Activated naive CD4-positive, alpha-beta T cell treated with anti-CD3 and anti-CD28 coated beads for 36 hours (primary cell): ENCODE measurements at regions of chr14 and their contacts with region 1.

Region 1: DNA sequence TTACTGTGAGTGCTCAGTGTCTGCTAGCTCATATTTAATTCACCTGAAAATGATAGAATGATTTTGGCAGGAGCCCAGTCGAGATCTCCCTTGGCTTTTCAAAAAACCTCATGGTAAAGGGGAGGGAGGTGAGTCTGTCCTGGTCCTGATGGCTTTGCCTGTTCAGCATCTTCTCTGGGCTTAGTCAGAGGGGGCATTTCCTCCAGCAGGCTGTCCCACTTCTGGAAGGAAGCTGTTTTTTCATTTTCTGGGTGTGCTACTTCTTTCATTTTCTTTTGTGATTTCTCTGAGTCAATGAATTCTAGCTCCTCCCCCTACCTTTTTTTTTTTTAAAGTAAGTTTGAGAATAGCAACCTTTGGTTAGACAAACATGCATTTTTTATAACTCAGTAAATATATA is 58.8 kb downstream of the TMX1 start:
- DNase-seq: peak; percentile 53
- H3K4me3 Mint-ChIP-seq: no peak overlapping the region
- H3K27ac Mint-ChIP-seq: no peak overlapping the region
- H3K4me1 Mint-ChIP-seq: peaks cover 12% of the 10 kb centered on the region
- H3K27me3 Mint-ChIP-seq: peaks cover 5% of the 10 kb centered on the region

Region 2: DNA sequence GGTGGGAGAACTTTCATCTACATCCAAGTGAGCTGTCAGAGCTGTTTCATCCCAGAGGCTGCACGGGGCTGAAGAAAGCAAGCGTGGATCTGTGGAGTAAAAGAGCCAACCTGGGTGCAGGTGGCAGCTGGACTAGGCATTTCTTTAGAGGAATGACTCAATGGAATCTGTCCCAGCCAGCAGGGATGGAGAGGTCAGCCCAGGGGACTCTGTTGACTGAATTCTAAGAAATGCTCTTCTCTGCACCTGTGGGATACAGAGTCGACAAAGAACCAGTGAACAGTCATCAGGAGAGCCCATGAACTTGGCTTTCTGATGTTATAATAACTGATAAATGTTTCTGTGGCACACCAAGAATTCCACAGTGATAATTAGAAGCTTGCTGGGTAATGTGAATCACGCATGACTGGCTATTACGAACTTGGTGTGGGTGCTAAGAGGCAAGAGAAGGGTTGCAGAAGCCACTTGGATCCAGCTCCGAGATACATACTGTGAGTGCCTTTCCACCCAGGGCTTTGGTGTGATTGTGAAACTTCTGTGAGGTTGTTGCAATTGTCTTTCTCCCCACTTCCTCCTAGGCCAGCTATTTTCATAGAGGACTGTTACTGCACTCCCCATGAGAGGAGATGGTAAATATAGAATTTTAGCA is 370.8 kb before region 1 on chr14:
- CTCF ChIA-PET with region 1: no interaction called
- intact Hi-C with region 1: no loop called
- DNase-seq: no peak
- H3K4me3 Mint-ChIP-seq: no peak overlapping the region
- H3K27ac Mint-ChIP-seq: no peak overlapping the region
- H3K4me1 Mint-ChIP-seq: no peaks in the 10 kb centered on the region
- H3K27me3 Mint-ChIP-seq: peaks cover 3% of the 10 kb centered on the region

Region 3: GRCh38 chr14:51328064-51328771 is 29.3 kb after region 1 on chr14:
- CTCF ChIA-PET with region 1: no interaction called
- intact Hi-C with region 1: loop called (anchors 2 kb)
- DNase-seq: peak; percentile 68
- H3K4me3 Mint-ChIP-seq: no peak overlapping the region
- H3K27ac Mint-ChIP-seq: no peak overlapping the region
- H3K4me1 Mint-ChIP-seq: peaks cover 11% of the 10 kb centered on the region
- H3K27me3 Mint-ChIP-seq: peaks cover 30% of the 10 kb centered on the region

Region 4: GRCh38 chr14:51448831-51449670 is 150.2 kb after region 1 on chr14:
- CTCF ChIA-PET with region 1: no interaction called
- intact Hi-C with region 1: no loop called
- DNase-seq: no peak
- H3K4me3 Mint-ChIP-seq: no peak overlapping the region
- H3K27ac Mint-ChIP-seq: no peak overlapping the region
- H3K4me1 Mint-ChIP-seq: no peaks in the 10 kb centered on the region
- H3K27me3 Mint-ChIP-seq: peaks cover 3% of the 10 kb centered on the region